Activated naive CD4-positive, alpha-beta T cell treated with anti-CD3 and anti-CD28 coated beads for 36 hours (primary cell): ENCODE measurements at regions of chr5 and their contacts with region 1.

Region 1: GRCh38 chr5:132500931-132501630 is 10.5 kb upstream of the IRF1 start:
- DNase-seq: peak; percentile 86
- H3K4me3 Mint-ChIP-seq: no peak overlapping the region
- H3K27ac Mint-ChIP-seq: no peak overlapping the region
- H3K4me1 Mint-ChIP-seq: peaks cover 19% of the 10 kb centered on the region
- H3K27me3 Mint-ChIP-seq: no peaks in the 10 kb centered on the region

Region 2: GRCh38 chr5:132272311-132273210 is 228.5 kb before region 1 on chr5:
- CTCF ChIA-PET with region 1: interaction called, 10 read pairs
- intact Hi-C with region 1: loop called (anchors 1 kb)
- DNase-seq: peak; percentile 82
- H3K4me3 Mint-ChIP-seq: no peak overlapping the region
- H3K27ac Mint-ChIP-seq: no peak overlapping the region
- H3K4me1 Mint-ChIP-seq: peaks cover 12% of the 10 kb centered on the region
- H3K27me3 Mint-ChIP-seq: peaks cover 20% of the 10 kb centered on the region

Region 3: DNA sequence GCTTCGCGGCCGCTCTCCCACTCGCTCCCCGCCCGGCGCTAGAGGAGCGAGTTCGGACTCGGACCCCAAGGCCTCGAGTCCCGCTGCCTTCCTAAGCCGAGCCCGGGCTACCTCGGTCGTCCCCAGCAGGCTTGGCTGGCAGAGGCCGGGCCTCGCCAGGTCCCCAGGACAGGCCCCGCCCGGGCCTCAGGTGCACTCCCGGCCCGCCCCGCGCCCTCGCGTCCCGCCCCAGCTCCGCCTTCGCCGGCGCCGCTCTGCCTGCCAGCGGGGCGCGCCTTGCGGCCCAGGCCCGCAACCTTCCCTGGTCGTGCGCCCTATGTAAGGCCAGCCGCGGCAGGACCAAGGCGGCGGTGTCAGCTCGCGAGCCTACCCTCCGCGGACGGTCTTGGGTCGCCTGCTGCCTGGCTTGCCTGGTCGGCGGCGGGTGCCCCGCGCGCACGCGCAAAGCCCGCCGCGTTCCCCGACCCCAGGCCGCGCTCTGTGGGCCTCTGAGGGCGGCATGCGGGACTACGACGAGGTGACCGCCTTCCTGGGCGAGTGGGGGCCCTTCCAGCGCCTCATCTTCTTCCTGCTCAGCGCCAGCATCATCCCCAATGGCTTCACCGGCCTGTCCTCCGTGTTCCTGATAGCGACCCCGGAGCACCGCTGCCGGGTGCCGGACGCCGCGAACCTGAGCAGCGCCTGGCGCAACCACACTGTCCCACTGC is 131.5 kb before region 1 on chr5 and contains the start of gene SLC22A5:
- CTCF ChIA-PET with region 1: interaction called, 14 read pairs
- intact Hi-C with region 1: no loop called
- DNase-seq: peak; percentile 72
- H3K4me3 Mint-ChIP-seq: peak within 1 kb of the TSS; percentile 77
- H3K27ac Mint-ChIP-seq: peak within 1 kb of the TSS; percentile 68
- H3K4me1 Mint-ChIP-seq: peaks cover 22% of the 10 kb centered on the region
- H3K27me3 Mint-ChIP-seq: no peaks in the 10 kb centered on the region
- total RNA-seq, gene SLC22A5: 3.1 to 3.6 TPM

Region 4: GRCh38 chr5:132479111-132479951 is 21.8 kb before region 1 on chr5:
- CTCF ChIA-PET with region 1: interaction called, 22 read pairs
- intact Hi-C with region 1: no loop called
- DNase-seq: no peak
- H3K4me3 Mint-ChIP-seq: no peak overlapping the region
- H3K27ac Mint-ChIP-seq: peak overlapping the region; percentile 36
- H3K4me1 Mint-ChIP-seq: peaks cover 53% of the 10 kb centered on the region
- H3K27me3 Mint-ChIP-seq: no peaks in the 10 kb centered on the region